Lower leg skin (tissue), 4 donors: ENCODE measurements at regions of chr2 and their contacts with region 1.

Region 1: DNA sequence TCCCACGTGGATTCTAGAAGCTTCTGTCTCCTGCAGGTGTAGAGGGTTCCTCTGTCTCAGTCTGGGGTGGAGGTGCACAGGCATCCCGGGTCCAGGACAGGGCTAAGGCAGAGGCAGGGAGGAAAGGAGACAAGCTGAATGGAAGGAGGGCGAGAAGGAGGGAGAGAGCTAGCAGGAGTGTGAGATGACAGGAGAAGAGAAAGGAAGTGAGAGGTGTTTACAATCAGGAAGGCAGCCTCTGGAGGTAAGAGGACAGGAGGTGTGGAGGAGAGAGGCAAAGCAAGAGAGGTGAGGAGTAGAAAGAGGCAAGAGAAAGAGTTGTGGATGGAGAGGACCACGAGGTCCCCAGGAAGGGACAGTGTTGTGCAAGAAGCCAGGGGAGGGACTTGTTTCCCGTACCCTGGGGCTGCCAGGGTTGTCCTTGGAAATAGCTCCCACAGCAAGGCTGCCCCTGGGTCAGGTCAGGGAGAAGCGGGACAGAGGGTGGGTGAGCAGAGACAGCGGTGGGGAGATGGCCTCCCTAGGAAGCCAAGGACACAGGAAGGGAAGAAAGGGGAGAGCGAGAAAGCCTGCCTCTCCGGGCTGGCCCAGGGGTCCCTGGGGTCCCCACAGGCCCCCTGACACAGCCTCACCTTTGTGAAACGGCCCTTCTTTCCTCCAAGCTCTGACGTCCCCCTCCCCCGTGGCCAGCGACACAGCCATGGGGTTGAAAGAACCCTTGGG is 136.9 kb downstream of the CYP26B1 start:
- DNase-seq: peak; percentile 12 to 68
- H3K4me3 ChIP-seq: no peak overlapping the region
- CTCF ChIP-seq: no peak
- POLR2A ChIP-seq: no peak

Region 2: GRCh38 chr2:72035518-72036172 is 24.8 kb after region 1 on chr2:
- intact Hi-C with region 1: loop called (anchors 2 kb)
- DNase-seq: peak; percentile 16 to 82
- H3K4me3 ChIP-seq: no peak overlapping the region
- CTCF ChIP-seq: no peak
- POLR2A ChIP-seq: no peak